ENCODE measurements at regions of chr19 and their contacts with region 1.

Region 1: DNA sequence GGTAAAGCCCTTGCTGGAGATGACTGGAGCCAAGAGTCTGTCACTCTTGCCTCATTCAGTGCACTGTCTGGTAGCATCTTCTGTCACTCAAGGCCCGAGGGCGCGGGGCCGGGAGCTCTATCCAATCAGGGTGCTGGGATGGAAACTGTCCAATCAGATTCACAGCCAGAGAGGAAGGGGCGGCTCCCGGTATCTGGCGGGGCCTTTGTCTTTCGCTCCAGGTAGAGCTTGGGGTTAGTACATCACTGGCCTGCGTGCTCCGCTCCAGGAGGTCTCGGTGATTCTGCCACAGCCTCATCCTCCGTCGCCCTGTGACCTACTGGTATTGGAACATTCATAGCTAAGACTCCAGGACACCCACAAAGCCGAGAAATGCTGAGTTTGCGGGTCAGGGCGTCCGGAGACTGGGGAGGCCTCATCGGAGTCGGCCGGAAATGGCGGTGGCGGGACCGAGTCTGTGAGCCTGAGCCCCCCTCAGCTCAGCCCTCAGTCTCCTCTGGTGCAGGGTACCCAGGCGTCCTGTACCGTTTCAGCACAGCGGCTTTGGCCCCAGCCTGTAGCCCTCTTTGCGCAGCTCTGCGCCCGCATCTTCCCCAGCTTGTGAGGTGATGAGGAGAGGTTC is 20.6 kb upstream of the ZNF430 start:
- DNase-seq: no peak
- ATAC-seq: no peak
- H3K4me3 ChIP-seq: no peak overlapping the region
- H3K27ac ChIP-seq: no peak overlapping the region
- H3K4me1 ChIP-seq: no peaks in the 10 kb centered on the region
- H3K27me3 ChIP-seq: no peaks in the 10 kb centered on the region
- CTCF ChIP-seq: no peak
- POLR2A ChIP-seq: no peak
- RAD21 ChIP-seq: no peak

Region 2: DNA sequence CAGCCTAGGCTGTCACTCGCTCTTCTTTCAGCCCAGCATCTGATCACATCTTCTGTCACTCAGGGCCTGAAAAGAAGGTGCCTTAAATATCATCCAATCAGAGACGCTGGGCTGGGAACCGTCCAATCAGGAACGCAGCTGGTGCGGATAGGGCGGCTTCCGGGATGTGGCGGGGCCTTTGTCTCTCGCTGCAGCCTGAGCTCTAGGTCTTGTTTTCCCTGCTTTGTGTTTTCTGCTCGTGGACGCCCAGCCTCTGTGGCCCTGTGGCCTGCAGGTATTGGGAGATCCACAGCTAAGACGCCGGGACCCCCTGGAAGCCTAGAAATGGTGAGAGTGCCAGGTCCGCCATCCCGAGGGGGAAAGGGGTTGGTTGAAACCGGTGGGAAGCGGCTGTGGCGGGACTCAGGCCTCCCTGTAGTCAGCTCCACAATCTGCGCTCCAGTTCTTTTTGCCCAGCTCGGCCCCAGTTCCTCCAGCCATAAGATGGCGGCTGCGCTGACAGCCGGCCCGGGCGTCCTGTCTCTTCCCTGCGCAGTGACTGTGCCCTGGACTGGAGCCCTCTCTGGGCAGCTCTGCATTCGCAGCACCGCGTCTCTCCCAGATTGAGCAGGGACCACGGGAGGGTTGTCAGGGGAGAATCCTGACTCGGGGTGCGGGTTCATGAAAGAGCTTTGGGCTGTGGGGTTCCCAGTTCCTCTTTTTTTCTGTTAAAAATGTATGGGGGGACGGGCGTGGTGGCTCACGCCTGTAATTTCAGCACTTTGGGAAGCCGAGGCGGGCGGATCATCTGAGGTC is 76.6 kb before region 1 on chr19 and contains the start of gene ZNF85:
- CTCF ChIA-PET with region 1: no interaction called
- POLR2A ChIA-PET with region 1: no interaction called
- RAD21 ChIA-PET with region 1: no interaction called
- intact Hi-C with region 1: no loop called
- DNase-seq: peak; percentile 65
- ATAC-seq: peak; percentile 97
- H3K4me3 ChIP-seq: peak within 1 kb of the TSS; percentile 61 to 68
- H3K27ac ChIP-seq: peak within 1 kb of the TSS; percentile 51
- H3K4me1 ChIP-seq: no peaks in the 10 kb centered on the region
- H3K27me3 ChIP-seq: no peaks in the 10 kb centered on the region
- CTCF ChIP-seq: no peak
- POLR2A ChIP-seq: no peak
- RAD21 ChIP-seq: no peak
- total RNA-seq, gene ZNF85: 2.5 TPM

Region 3: GRCh38 chr19:21767065-21767800 is 767.4 kb after region 1 on chr19 and contains the start of gene ZNF100:
- CTCF ChIA-PET with region 1: no interaction called
- POLR2A ChIA-PET with region 1: no interaction called
- RAD21 ChIA-PET with region 1: no interaction called
- intact Hi-C with region 1: loop called (anchors 5 kb)
- DNase-seq: peak; percentile 93
- ATAC-seq: peak; percentile 97
- H3K4me3 ChIP-seq: peak within 1 kb of the TSS; percentile 84 to 94
- H3K27ac ChIP-seq: peak within 1 kb of the TSS; percentile 83
- H3K4me1 ChIP-seq: peaks cover 5 to 6% of the 10 kb centered on the region in 2 experiments; a peak in 2 of 4 replicates
- H3K27me3 ChIP-seq: no peaks in the 10 kb centered on the region
- CTCF ChIP-seq: no peak
- POLR2A ChIP-seq: no peak
- RAD21 ChIP-seq: no peak; the same call in 1 of the 2 replicates
- total RNA-seq, gene ZNF100: 8.5 TPM